ENCODE measurements at regions of chr14 and their contacts with region 1.

Region 1: DNA sequence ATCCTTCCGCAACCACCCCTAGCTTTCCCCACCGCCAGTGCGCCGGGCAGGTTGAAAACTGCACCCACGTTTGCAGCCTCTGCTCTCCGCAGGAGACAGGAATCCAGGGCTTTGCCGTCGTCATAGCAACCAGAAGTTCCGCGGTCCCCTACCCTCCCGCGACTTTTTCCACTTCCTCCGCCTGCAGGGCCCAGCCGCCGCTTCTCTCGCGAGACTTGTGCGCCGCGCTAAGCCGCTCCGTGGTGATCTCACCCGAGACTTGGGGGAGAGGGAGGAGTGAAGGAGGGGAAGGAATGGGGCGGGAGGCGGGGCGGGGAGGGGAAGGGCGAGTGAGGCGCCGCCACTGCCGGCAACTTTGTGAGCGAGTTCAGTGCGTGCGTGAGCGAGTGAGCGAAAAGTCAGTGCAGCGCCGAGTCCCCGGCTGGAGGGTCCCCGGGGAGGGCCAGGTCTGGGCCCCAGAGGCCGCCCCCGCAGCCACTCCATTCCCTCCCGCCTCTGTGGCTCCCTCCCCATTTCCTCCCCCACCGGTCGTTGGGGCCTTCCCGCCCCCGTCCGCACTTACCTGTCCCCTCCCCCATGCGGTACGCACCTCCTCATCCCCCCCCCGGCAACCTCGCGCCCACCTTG is 413.0 kb downstream of the PCNX1 start:
- DNase-seq: peak; percentile 96
- ATAC-seq: peak; percentile 79
- H3K4me3 ChIP-seq: peak within 1 kb of the TSS; percentile 98
- H3K27ac ChIP-seq: peak within 1 kb of the TSS; percentile 94
- H3K4me1 ChIP-seq: peaks cover 11% of the 10 kb centered on the region
- H3K27me3 ChIP-seq: no peaks in the 10 kb centered on the region
- CTCF ChIP-seq: no peak
- EP300 ChIP-seq: peak in 1 of 2 experiments; percentile 57; a peak in 2 of 4 replicates
- POLR2A ChIP-seq: peak; percentile 85
- RAD21 ChIP-seq: no peak

Region 2: GRCh38 chr14:71206766-71207371 is 113.4 kb before region 1 on chr14:
- CTCF ChIA-PET with region 1: no interaction called
- POLR2A ChIA-PET with region 1: no interaction called
- RAD21 ChIA-PET with region 1: no interaction called
- SMC1A ChIA-PET with region 1: no interaction called
- in situ Hi-C with region 1: no loop called
- intact Hi-C with region 1: no loop called
- DNase-seq: no peak
- ATAC-seq: no peak
- H3K4me3 ChIP-seq: no peak overlapping the region
- H3K27ac ChIP-seq: no peak overlapping the region
- H3K4me1 ChIP-seq: no peaks in the 10 kb centered on the region
- H3K27me3 ChIP-seq: no peaks in the 10 kb centered on the region
- CTCF ChIP-seq: no peak
- EP300 ChIP-seq: no peak
- POLR2A ChIP-seq: no peak
- RAD21 ChIP-seq: no peak

Region 3: DNA sequence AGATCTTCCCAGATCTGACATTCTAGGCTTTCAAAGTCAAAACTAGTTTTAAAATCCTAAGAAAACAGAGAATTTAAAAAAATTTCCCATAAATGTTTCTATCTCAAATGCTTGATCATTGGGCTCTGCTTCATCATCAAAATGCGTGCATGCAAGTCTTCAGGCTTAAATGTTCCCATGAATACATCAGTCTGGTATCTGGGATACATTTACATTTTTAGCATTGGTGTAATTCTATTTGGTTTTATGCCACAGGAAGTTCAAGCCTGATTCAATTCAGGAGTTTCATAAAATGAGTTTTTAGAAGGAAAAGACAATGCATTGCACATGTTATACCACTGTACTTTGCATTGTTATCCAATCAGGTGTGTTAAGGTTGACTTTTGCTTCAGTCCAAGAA is 76.5 kb before region 1 on chr14:
- CTCF ChIA-PET with region 1: no interaction called
- POLR2A ChIA-PET with region 1: no interaction called
- RAD21 ChIA-PET with region 1: no interaction called
- SMC1A ChIA-PET with region 1: no interaction called
- in situ Hi-C with region 1: no loop called
- intact Hi-C with region 1: no loop called
- DNase-seq: no peak
- ATAC-seq: no peak
- H3K4me3 ChIP-seq: no peak overlapping the region
- H3K27ac ChIP-seq: no peak overlapping the region
- H3K4me1 ChIP-seq: no peaks in the 10 kb centered on the region; the same call in 1 of the 2 replicates
- H3K27me3 ChIP-seq: no peaks in the 10 kb centered on the region
- CTCF ChIP-seq: no peak
- EP300 ChIP-seq: no peak
- POLR2A ChIP-seq: no peak
- RAD21 ChIP-seq: no peak

Region 4: DNA sequence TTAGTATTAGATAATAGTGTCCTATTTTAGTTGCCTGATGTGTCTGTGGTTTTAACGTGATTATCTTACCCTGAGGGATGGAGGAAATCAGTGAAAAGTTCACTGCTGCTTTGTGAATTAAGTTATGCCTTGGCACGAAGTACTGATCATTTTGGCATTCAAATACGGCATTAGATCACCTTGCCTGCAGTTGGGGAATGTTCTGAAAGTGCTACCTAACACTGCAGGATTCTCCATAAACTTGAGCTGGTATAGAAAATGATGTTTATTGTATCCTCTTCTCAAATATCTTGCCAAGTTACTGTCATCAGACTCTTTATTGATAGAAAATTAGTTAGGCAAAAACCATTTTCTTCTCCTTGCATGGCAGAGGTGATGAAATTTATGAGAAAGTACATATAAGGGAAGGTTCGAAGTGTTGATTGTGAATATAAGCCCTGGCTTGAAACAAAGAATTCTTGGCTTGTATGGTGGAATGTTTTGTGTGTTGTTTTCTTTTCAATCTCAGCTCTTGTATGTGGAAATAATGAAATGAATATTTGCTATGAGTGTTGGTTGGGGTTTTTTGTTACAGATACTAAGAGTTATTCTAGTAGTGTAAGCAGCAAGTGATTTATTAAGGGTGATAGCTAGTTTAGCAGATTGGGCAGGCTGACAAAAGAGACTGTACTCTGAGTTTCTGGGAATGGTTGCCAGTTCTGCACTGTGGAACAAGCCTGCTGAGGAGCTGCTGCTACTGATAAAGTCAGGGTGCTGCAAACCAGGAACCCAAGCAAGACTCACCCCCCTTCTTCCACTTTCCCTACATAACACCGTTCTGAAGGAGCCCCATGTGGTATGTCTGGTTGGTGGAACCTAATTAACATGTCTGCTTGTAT is 35.3 kb after region 1 on chr14:
- CTCF ChIA-PET with region 1: interaction called, 12 read pairs
- POLR2A ChIA-PET with region 1: interaction called, 21 read pairs
- RAD21 ChIA-PET with region 1: interaction called, 128 read pairs
- SMC1A ChIA-PET with region 1: interaction called, 92 read pairs
- in situ Hi-C with region 1: no loop called
- intact Hi-C with region 1: loop called (anchors 2 kb)
- DNase-seq: no peak
- ATAC-seq: peak; percentile 45
- H3K4me3 ChIP-seq: peak overlapping the region; percentile 20; the same call in 1 of the 2 replicates
- H3K27ac ChIP-seq: peak overlapping the region; percentile 52
- H3K4me1 ChIP-seq: peaks cover 38% of the 10 kb centered on the region
- H3K27me3 ChIP-seq: no peaks in the 10 kb centered on the region
- CTCF ChIP-seq: no peak
- EP300 ChIP-seq: no peak
- POLR2A ChIP-seq: no peak
- RAD21 ChIP-seq: no peak

Region 5: DNA sequence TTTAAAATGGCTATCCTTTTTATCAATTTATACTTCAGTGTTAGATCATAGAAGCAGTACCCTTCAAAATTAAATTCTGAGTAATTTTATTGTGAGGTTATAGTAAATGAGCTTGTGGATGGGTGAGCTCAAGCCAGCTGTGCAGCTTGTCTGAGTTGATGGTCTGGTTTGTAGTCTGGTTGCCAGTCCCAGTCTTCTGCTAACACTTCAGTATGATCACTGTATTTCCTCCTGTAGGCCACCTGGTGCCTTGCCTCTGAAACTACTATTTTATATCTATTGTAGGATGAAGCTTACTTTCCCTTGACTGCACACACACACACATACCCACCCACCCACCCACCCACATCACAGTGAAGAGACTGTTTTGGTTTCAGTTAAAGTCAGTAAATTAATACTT is 83.4 kb after region 1 on chr14:
- CTCF ChIA-PET with region 1: interaction called, 89 read pairs
- POLR2A ChIA-PET with region 1: interaction called, 10 read pairs
- RAD21 ChIA-PET with region 1: interaction called, 68 read pairs
- SMC1A ChIA-PET with region 1: interaction called, 57 read pairs
- in situ Hi-C with region 1: no loop called
- intact Hi-C with region 1: loop called (anchors 1 kb)
- DNase-seq: peak; percentile 42
- ATAC-seq: peak; percentile 71
- H3K4me3 ChIP-seq: no peak overlapping the region
- H3K27ac ChIP-seq: no peak overlapping the region
- H3K4me1 ChIP-seq: peaks cover 26% of the 10 kb centered on the region
- H3K27me3 ChIP-seq: no peaks in the 10 kb centered on the region
- CTCF ChIP-seq: peak; percentile 7 to 22 (median 10); a peak in 2 of 6 replicates
- EP300 ChIP-seq: no peak
- POLR2A ChIP-seq: no peak
- RAD21 ChIP-seq: peak; percentile 54

Region 6: GRCh38 chr14:71472043-71472960 is 152.1 kb after region 1 on chr14:
- CTCF ChIA-PET with region 1: interaction called, 3 read pairs
- POLR2A ChIA-PET with region 1: interaction called, 5 read pairs
- RAD21 ChIA-PET with region 1: interaction called, 10 read pairs
- SMC1A ChIA-PET with region 1: interaction called, 48 read pairs
- in situ Hi-C with region 1: no loop called
- intact Hi-C with region 1: no loop called
- DNase-seq: no peak
- ATAC-seq: peak; percentile 84
- H3K4me3 ChIP-seq: no peak overlapping the region
- H3K27ac ChIP-seq: peak overlapping the region; percentile 69
- H3K4me1 ChIP-seq: peaks cover 35% of the 10 kb centered on the region
- H3K27me3 ChIP-seq: no peaks in the 10 kb centered on the region
- CTCF ChIP-seq: no peak
- EP300 ChIP-seq: 0 out of 4 replicates have a peak, but pooled peaks of 1 of the 2 experiments have one; percentile 1
- POLR2A ChIP-seq: no peak
- RAD21 ChIP-seq: no peak

Region 7: DNA sequence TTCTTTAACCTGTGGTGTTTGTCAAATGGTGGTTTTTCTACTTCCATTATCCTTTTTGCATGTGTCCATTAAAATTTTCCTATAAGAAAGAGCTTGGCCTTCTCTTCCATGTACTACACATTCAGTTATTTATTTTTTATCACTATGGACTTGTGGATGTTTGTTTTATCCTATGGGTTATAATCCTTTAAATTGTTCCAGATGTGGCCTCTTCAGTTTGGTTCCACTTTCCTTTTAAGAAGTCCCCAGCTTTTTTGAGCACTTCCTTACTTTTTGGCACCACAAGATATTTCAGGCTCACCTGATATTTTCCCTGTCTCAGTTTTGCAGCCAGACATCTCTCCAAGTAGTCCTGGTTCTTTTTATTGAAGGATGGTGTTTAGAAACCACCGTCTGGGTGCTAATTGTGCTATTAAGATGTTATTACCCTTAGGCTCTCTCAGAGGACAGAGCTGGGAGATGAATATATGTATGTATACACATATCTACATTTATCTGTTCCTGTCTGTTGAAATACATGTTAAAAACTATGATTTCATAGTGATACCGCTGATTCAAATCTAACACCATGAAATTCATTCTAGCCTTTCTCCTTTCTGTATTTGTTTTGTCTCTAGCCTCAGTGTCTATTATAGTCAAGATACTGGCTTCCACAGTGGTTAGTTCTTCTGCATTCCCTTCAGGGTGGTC is 203.6 kb after region 1 on chr14:
- CTCF ChIA-PET with region 1: interaction called, 4 read pairs
- POLR2A ChIA-PET with region 1: no interaction called
- RAD21 ChIA-PET with region 1: interaction called, 4 read pairs
- SMC1A ChIA-PET with region 1: interaction called, 5 read pairs
- in situ Hi-C with region 1: no loop called
- intact Hi-C with region 1: loop called (anchors 10 kb)
- DNase-seq: peak; percentile 76
- ATAC-seq: peak; percentile 91
- H3K4me3 ChIP-seq: peak overlapping the region; percentile 22; the same call in 1 of the 2 replicates
- H3K27ac ChIP-seq: peak overlapping the region; percentile 72
- H3K4me1 ChIP-seq: peaks cover 26% of the 10 kb centered on the region
- H3K27me3 ChIP-seq: no peaks in the 10 kb centered on the region
- CTCF ChIP-seq: no peak
- EP300 ChIP-seq: peak; percentile 82 to 95
- POLR2A ChIP-seq: no peak
- RAD21 ChIP-seq: no peak

Region 8: GRCh38 chr14:71620401-71620800 is 300.2 kb after region 1 on chr14:
- CTCF ChIA-PET with region 1: interaction called, 5 read pairs
- POLR2A ChIA-PET with region 1: no interaction called
- RAD21 ChIA-PET with region 1: interaction called, 4 read pairs
- SMC1A ChIA-PET with region 1: interaction called, 10 read pairs
- in situ Hi-C with region 1: no loop called
- intact Hi-C with region 1: no loop called
- DNase-seq: no peak
- ATAC-seq: no peak
- H3K4me3 ChIP-seq: no peak overlapping the region
- H3K27ac ChIP-seq: peak overlapping the region; percentile 28; the same call in 1 of the 2 replicates
- H3K4me1 ChIP-seq: peaks cover 11% of the 10 kb centered on the region; the same call in 1 of the 2 replicates
- H3K27me3 ChIP-seq: no peaks in the 10 kb centered on the region
- CTCF ChIP-seq: no peak
- EP300 ChIP-seq: no peak
- POLR2A ChIP-seq: no peak
- RAD21 ChIP-seq: no peak

Region 9: DNA sequence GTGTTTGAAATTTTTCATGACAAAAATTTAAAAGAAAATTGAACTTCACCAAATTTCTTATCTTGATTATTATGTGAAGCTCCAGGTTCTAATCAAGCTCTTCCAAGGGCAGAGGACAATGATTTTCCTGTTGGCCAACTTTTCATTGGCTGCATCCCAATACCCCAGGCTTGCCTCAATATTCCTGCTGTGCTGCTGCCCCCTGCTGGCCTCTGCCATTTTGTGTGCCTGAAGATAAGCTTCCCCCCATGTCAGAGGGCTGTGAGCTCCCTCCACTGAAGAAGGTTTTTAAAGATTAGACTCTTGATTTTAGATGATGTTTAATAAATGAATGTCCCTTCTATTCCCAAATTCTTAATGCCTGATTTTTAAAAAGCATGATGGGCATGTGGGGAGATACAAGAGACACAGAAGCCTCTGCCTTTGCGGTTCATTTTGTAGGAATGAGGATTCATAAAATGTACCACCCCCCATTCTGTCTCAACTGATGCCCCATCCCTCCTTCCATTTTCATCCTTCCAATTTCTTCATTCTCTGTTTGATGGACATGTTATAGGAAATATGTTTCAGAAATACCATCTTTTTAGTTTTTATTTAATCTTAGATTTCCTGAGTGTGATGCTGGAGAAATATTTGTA is 535.3 kb after region 1 on chr14:
- CTCF ChIA-PET with region 1: interaction called, 15 read pairs
- POLR2A ChIA-PET with region 1: no interaction called
- RAD21 ChIA-PET with region 1: interaction called, 21 read pairs
- SMC1A ChIA-PET with region 1: interaction called, 9 read pairs
- in situ Hi-C with region 1: no loop called
- intact Hi-C with region 1: no loop called
- DNase-seq: peak; percentile 31
- ATAC-seq: peak; percentile 85
- H3K4me3 ChIP-seq: no peak overlapping the region
- H3K27ac ChIP-seq: peak overlapping the region; percentile 58; the same call in 1 of the 2 replicates
- H3K4me1 ChIP-seq: peaks cover 10% of the 10 kb centered on the region
- H3K27me3 ChIP-seq: no peaks in the 10 kb centered on the region
- CTCF ChIP-seq: peak; percentile 68 to 77 (median 71)
- EP300 ChIP-seq: no peak
- POLR2A ChIP-seq: no peak
- RAD21 ChIP-seq: peak; percentile 78